ENCODE measurements at regions of chrX and their contacts with region 1.

Region 1: DNA sequence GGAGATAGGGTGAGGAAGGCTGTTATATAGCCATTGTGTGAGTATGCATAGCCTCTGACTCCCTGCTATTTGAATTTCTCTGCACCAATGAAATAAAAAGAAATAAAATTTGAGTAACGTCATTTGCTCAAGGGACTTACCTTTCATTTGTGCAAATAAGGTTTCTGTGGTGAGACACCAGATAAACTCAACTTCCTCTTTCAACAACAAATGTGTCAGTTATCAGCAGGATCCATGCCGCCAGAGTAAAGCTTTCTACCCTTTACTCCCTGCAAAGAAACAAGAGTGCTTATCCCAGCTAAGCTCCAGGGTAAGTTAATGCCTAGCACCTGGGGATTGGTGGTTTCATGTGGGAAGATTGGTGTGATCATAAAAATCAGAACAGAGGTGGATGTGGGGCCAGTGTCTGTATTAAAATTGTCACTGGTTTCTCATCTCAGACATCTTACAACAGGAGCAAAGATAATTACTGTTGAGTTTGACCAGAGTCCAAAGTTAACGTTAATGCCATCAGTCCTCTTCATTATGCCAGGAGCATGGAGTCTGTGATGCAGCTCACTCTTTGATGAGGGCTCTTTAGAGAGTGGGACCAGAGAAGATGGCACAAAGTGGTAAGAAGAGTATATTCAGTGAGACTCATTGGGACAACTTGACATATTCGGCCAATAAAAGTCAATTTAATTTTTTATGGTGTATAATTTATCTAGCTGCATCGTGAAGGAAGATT is at the start of gene P2RY10:
- DNase-seq: peak; percentile 10
- H3K4me3 Mint-ChIP-seq: peak within 1 kb of the TSS; percentile 94
- H3K27ac Mint-ChIP-seq: peak within 1 kb of the TSS; percentile 94
- H3K4me1 Mint-ChIP-seq: peaks cover 35% of the 10 kb centered on the region
- H3K27me3 Mint-ChIP-seq: no peaks in the 10 kb centered on the region
- total RNA-seq, gene P2RY10: 55.6 and 65.7 TPM in 2 replicates

Region 2: GRCh38 chrX:78103623-78104446 is 841.5 kb before region 1 on chrX and contains the start of gene PGK1:
- intact Hi-C with region 1: loop called (anchors 10 kb)
- DNase-seq: peak; percentile 93
- H3K4me3 Mint-ChIP-seq: peak within 1 kb of the TSS; percentile 96
- H3K27ac Mint-ChIP-seq: peak within 1 kb of the TSS; percentile 87
- H3K4me1 Mint-ChIP-seq: peaks cover 32% of the 10 kb centered on the region
- H3K27me3 Mint-ChIP-seq: no peaks in the 10 kb centered on the region
- total RNA-seq, gene PGK1: 1,005 and 1,045 TPM in 2 replicates

Region 3: DNA sequence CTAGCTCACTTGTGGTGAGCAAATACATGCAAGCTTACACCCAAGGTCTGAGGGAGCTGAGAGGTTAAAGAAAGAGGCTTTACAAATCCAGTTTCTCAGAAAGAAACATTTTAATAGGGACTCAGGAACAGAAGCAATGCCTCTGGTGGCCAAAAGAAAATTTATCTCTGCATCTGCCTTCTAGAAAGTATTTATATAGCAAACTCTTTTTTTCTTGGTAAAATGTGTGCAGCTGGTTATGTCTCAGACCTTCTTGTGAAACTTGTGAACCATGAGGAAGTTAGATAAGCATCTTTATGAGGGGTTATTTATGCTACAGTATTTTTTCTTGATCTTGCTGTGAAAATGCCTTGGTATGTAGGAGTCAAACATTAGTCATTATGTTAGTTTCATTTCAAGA is 569.5 kb before region 1 on chrX:
- intact Hi-C with region 1: loop called (anchors 10 kb)
- DNase-seq: no peak
- H3K4me3 Mint-ChIP-seq: no peak overlapping the region
- H3K27ac Mint-ChIP-seq: peak overlapping the region; percentile 31
- H3K4me1 Mint-ChIP-seq: peaks cover 31% of the 10 kb centered on the region
- H3K27me3 Mint-ChIP-seq: no peaks in the 10 kb centered on the region

Region 4: DNA sequence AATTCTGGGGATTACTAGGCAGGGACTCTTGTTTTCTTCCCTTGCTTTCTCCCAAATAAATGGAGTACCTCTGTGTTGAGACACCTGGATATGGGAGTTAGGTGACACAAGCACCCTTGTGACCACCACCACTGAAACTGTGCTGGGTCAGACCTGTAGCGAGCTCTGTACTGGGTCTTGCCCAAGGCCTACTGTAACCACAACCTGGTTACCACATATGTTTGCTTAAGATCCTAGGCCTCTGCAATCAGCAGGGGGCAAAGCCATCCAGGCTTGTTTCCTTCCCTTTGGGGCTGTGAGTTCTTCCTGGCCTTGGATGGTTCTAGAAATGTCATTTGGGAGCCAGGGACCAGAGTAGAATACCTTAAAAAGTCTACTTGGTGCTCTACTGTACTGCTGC is 148.4 kb before region 1 on chrX:
- intact Hi-C with region 1: no loop called
- DNase-seq: no peak
- H3K4me3 Mint-ChIP-seq: no peak overlapping the region
- H3K27ac Mint-ChIP-seq: no peak overlapping the region
- H3K4me1 Mint-ChIP-seq: peaks cover 10% of the 10 kb centered on the region
- H3K27me3 Mint-ChIP-seq: no peaks in the 10 kb centered on the region

Region 5: GRCh38 chrX:78910010-78910409 is 35.3 kb before region 1 on chrX:
- intact Hi-C with region 1: no loop called
- DNase-seq: no peak
- H3K4me3 Mint-ChIP-seq: no peak overlapping the region
- H3K27ac Mint-ChIP-seq: no peak overlapping the region
- H3K4me1 Mint-ChIP-seq: no peaks in the 10 kb centered on the region
- H3K27me3 Mint-ChIP-seq: no peaks in the 10 kb centered on the region

Region 6: GRCh38 chrX:78923198-78924015 is 21.9 kb before region 1 on chrX:
- intact Hi-C with region 1: loop called (anchors 2 kb)
- DNase-seq: no peak
- H3K4me3 Mint-ChIP-seq: no peak overlapping the region
- H3K27ac Mint-ChIP-seq: peak overlapping the region; percentile 91
- H3K4me1 Mint-ChIP-seq: peaks cover 15% of the 10 kb centered on the region
- H3K27me3 Mint-ChIP-seq: no peaks in the 10 kb centered on the region

Region 7: GRCh38 chrX:79081895-79082512 is 136.7 kb after region 1 on chrX:
- intact Hi-C with region 1: loop called (anchors 5 kb)
- DNase-seq: peak; percentile 10
- H3K4me3 Mint-ChIP-seq: no peak overlapping the region
- H3K27ac Mint-ChIP-seq: peak overlapping the region; percentile 65
- H3K4me1 Mint-ChIP-seq: peaks cover 19% of the 10 kb centered on the region
- H3K27me3 Mint-ChIP-seq: no peaks in the 10 kb centered on the region

Region 8: GRCh38 chrX:79366873-79367749 is 421.8 kb after region 1 on chrX and contains the start of gene ITM2A:
- intact Hi-C with region 1: loop called (anchors 10 kb)
- DNase-seq: peak; percentile 34
- H3K4me3 Mint-ChIP-seq: peak within 1 kb of the TSS; percentile 95
- H3K27ac Mint-ChIP-seq: peak within 1 kb of the TSS; percentile 92
- H3K4me1 Mint-ChIP-seq: peaks cover 33% of the 10 kb centered on the region
- H3K27me3 Mint-ChIP-seq: no peaks in the 10 kb centered on the region
- total RNA-seq, gene ITM2A: 138 and 142 TPM in 2 replicates